CD4-positive, alpha-beta T cell (primary cell): ENCODE measurements at regions of chr17 and their contacts with region 1.

Region 1: DNA sequence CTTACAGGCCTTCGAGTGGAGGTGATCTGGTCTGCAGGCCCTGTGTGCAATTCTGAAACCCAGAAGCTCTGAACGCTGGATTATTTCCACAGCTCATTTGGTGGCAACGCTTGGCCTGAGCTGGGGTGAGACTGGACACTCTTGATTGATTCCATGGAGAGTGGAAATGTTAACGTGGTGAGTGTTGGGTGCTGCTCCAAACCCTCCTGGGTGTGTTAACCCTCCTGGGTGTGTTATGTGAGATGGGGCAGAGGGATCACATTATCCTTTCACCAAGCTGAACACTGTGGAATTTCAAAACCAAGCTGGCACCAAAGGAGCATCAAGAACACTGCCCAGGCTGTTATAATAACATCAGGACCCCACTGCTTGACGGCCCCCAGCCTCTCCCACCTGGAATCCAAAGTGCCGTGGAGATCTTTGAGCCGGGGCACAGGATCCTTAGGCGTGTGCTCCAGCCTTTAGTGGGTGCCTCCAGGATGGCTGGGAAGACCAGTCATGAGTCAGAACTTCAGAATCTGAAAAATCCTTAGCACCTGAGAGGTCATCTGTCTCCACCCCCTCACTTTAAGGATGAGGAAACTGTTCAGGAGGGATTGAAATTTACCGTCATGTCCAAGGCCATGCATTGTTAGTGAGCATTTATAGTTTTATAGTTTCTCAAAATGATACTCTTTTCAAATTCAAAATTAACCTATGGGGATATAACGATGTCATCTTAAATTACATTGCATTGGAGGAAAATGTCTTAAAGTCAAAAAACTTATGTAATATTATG is 75.1 kb downstream of the RPTOR start:
- DNase-seq: no peak
- ATAC-seq: no peak
- H3K4me3 ChIP-seq: no peak overlapping the region
- H3K4me3 Mint-ChIP-seq: no peak overlapping the region
- H3K27ac ChIP-seq: no peak overlapping the region
- H3K27ac Mint-ChIP-seq: no peak overlapping the region
- H3K4me1 ChIP-seq: peaks cover 29% of the 10 kb centered on the region
- H3K4me1 Mint-ChIP-seq: peaks cover 55% of the 10 kb centered on the region
- H3K27me3 ChIP-seq: no peaks in the 10 kb centered on the region
- H3K27me3 Mint-ChIP-seq: no peaks in the 10 kb centered on the region
- CTCF ChIP-seq: no peak

Region 2: DNA sequence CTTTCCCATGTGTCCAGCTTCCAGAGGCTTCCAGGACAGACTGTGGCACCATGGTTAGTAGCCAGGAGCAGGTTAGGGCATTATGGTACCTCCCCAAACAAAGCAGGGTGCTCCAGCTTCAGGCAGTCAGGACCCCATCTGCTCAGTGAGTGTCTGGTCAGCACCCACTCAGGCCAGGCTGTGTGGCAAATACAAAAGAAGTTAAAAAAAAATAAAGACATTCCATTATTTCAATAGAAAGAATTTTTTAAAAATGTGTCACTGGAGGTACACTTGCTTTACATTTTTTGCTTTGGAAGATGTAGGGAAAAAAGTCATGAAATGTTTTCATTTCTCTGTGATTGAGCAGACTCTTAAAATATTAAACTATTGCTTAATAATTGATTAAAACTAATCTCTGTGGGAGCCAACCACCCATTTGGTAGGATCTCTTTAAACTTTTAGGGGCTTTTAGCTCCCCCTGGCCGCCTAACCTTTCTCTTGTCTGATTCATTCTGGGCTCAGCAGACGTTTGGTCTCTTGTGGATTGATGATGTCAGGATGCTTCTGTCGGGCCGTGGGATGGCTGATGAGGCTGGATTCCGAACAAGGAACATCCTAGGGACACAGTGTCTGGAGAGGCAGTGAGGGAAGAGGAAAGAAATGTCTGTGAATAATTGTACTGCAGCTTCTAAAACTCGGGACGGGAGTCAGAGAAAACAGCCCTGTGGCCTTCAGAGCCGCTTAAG is 114.9 kb before region 1 on chr17:
- CTCF ChIA-PET with region 1: no interaction called
- POLR2A ChIA-PET with region 1: no interaction called
- intact Hi-C with region 1: no loop called
- DNase-seq: no peak
- ATAC-seq: no peak
- H3K4me3 ChIP-seq: no peak overlapping the region
- H3K4me3 Mint-ChIP-seq: no peak overlapping the region
- H3K27ac ChIP-seq: no peak overlapping the region
- H3K27ac Mint-ChIP-seq: no peak overlapping the region
- H3K4me1 ChIP-seq: no peaks in the 10 kb centered on the region
- H3K4me1 Mint-ChIP-seq: no peaks in the 10 kb centered on the region
- H3K27me3 ChIP-seq: peaks cover 2 to 12% of the 10 kb centered on the region in 2 experiments
- H3K27me3 Mint-ChIP-seq: no peaks in the 10 kb centered on the region
- CTCF ChIP-seq: no peak

Region 3: DNA sequence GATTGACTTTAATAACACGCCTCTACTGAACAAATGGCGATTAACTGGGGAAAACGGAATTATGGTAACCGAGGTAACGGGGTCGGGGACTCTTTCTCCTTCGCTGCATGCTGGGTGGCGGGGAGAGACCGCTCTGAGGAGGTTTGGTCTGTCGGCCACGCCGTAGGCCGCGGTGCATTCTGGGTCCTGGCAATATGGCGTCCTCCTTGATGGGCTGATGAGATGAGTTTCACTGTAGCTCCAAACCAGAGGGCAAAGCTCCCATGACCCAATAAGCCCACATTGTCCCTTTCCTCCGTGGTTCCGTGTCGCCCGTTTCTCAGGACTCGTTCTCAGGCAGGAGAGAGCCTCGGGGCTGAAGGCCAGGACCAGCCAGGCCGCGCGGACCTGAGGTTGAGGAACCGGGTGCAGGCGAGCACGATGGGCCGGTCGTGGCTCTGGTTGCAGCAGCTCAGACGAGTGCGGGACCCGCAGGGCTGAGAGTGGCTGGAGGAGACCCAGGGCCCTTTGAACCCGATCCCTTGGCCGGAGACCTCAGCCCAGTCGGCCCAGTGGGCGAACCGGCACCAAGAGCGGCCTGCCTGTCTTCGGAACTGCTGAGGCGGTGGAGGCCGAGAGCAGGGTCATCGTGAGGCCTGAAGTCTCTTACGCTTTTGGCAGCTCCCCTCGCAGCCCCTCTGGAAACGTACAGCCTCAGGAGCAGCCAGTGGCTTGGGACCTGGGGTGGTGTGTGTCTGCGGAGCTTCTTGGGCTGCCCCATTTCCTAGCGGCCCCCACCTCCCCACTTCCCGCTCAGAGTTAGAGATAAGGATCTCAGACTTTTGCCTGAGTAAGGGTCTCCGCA is 74.8 kb before region 1 on chr17 and contains the start of gene RPTOR:
- CTCF ChIA-PET with region 1: no interaction called
- POLR2A ChIA-PET with region 1: no interaction called
- intact Hi-C with region 1: no loop called
- DNase-seq: peak; percentile 80 to 92 (median 84)
- ATAC-seq: peak; percentile 99
- H3K4me3 ChIP-seq: peak within 1 kb of the TSS; percentile 98
- H3K4me3 Mint-ChIP-seq: peak within 1 kb of the TSS; percentile 92
- H3K27ac ChIP-seq: peak within 1 kb of the TSS; percentile 28 to 56
- H3K27ac Mint-ChIP-seq: peak within 1 kb of the TSS; percentile 83
- H3K4me1 ChIP-seq: peaks cover 20% of the 10 kb centered on the region
- H3K4me1 Mint-ChIP-seq: peaks cover 36% of the 10 kb centered on the region
- H3K27me3 ChIP-seq: peaks cover 0 to 2% of the 10 kb centered on the region in 2 experiments
- H3K27me3 Mint-ChIP-seq: peaks cover 8% of the 10 kb centered on the region
- CTCF ChIP-seq: no peak
- total RNA-seq, gene RPTOR: 45.0 to 47.1 TPM

Region 4: DNA sequence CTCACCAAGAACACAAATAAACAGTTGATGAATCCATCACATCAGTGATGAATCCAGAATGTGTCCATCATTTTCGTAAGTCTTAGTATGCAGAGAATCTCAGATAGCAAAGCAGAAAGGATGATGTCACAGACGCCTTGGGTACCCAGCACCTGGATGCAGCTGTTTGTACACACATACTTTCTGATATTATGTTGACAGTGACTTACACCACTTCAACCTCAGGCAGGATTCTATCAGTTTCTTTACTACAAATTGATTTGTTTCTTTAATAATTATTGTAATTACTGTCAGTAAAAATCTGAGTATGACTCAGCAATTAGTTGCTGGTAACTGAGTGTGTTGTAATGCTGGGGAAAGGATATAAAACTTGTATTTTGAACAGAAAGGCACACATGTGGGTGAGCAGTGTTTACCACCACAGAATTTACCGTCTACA is 84.7 kb after region 1 on chr17:
- CTCF ChIA-PET with region 1: no interaction called
- POLR2A ChIA-PET with region 1: interaction called, 5 read pairs
- intact Hi-C with region 1: loop called in 1 of 2 experiments (anchors 10 kb)
- DNase-seq: no peak
- ATAC-seq: no peak
- H3K4me3 ChIP-seq: no peak overlapping the region
- H3K4me3 Mint-ChIP-seq: no peak overlapping the region
- H3K27ac ChIP-seq: no peak overlapping the region
- H3K27ac Mint-ChIP-seq: peak overlapping the region; percentile 65
- H3K4me1 ChIP-seq: peaks cover 52% of the 10 kb centered on the region
- H3K4me1 Mint-ChIP-seq: peaks cover 72% of the 10 kb centered on the region
- H3K27me3 ChIP-seq: no peaks in the 10 kb centered on the region
- H3K27me3 Mint-ChIP-seq: no peaks in the 10 kb centered on the region
- CTCF ChIP-seq: no peak